Naive thymus-derived CD4-positive, alpha-beta T cell (primary cell): ENCODE measurements at regions of chr6 and their contacts with region 1.

Region 1: GRCh38 chr6:87154993-87155841 is at the start of gene ZNF292:
- DNase-seq: peak; percentile 82 to 97 (median 94)
- ATAC-seq: peak; percentile 85
- H3K4me3 ChIP-seq: peak within 1 kb of the TSS; percentile 93
- H3K4me3 Mint-ChIP-seq: peak within 1 kb of the TSS; percentile 81 to 99 (median 94)
- H3K27ac ChIP-seq: peak within 1 kb of the TSS; percentile 83
- H3K27ac Mint-ChIP-seq: peak within 1 kb of the TSS; percentile 88 to 99 (median 94)
- H3K4me1 ChIP-seq: peaks cover 40 to 45% of the 10 kb centered on the region in 2 donors
- H3K4me1 Mint-ChIP-seq: peaks cover 34 to 69% (median 55%) of the 10 kb centered on the region in 7 donors
- H3K27me3 ChIP-seq: no peaks in the 10 kb centered on the region
- H3K27me3 Mint-ChIP-seq: peaks cover 0 to 2% (median 0%) of the 10 kb centered on the region in 5 donors
- total RNA-seq, gene ZNF292: 62.4 to 87.5 (median 74.3) TPM

Region 2: DNA sequence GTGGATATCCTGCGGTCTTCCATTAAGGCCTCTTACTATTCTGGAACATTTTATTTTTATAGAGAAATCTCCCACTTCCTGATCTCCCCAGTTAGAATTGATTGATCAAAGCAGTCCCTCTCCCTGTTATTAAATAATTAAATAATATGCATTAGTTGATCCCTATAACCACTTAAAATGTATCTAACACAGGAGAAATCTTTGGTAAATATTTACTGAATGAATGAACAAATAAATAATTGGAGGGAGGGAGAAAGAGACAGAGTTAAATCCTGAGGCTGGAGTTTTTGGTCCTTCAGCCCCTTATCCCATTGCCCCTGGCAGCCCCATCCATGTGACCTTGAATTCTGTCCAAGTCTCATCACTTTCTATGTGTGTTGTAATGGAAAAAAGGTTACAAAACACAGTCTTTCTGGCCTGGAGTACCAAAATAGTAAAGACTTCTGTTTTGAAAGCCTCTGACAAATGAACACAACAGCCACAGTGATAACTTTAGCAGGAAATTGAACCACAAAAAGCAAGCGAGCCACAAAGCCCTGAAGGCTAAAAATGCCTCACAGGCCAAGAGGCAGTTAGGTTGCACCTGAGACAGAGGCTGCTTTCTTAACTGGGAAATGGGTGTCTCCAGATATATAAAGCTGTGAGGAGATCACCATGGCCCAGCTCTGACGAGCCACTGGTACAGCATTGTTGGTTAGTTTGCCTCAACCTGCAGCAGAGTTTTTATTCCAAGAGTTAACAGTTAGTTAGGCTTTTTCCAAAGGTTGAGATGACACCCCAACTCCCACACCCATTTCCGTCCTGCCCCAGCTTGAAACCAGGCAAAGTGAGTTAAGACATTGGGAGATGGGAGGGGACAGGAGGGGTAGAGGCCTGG is 1694.1 kb before region 1 on chr6:
- CTCF ChIA-PET with region 1: no interaction called
- POLR2A ChIA-PET with region 1: no interaction called
- intact Hi-C with region 1: loop called in 1 of 2 experiments (anchors 10 kb)
- DNase-seq: peak in 6 of 9 donors; percentile 17 to 53 (median 46)
- ATAC-seq: peak; percentile 54
- H3K4me3 ChIP-seq: no peak overlapping the region
- H3K4me3 Mint-ChIP-seq: peak overlapping the region in 7 of 10 donors; percentile 32 to 72 (median 68)
- H3K27ac ChIP-seq: no peak overlapping the region
- H3K27ac Mint-ChIP-seq: peak overlapping the region in 8 of 9 donors; percentile 38 to 92 (median 71)
- H3K4me1 ChIP-seq: peaks cover 9 to 25% of the 10 kb centered on the region in 2 donors
- H3K4me1 Mint-ChIP-seq: peaks cover 23 to 95% (median 63%) of the 10 kb centered on the region in 7 donors
- H3K27me3 ChIP-seq: no peaks in the 10 kb centered on the region
- H3K27me3 Mint-ChIP-seq: peaks cover 0 to 30% (median 28%) of the 10 kb centered on the region in 5 donors

Region 3: GRCh38 chr6:85678602-85679444 is 1476.4 kb before region 1 on chr6:
- CTCF ChIA-PET with region 1: no interaction called
- POLR2A ChIA-PET with region 1: no interaction called
- intact Hi-C with region 1: loop called (anchors 1 to 2 kb)
- DNase-seq: peak; percentile 97 to 99 (median 98)
- ATAC-seq: peak; percentile 96
- H3K4me3 ChIP-seq: peak overlapping the region; percentile 98
- H3K4me3 Mint-ChIP-seq: peak overlapping the region; percentile 93 to 100 (median 98)
- H3K27ac ChIP-seq: peak overlapping the region; percentile 93
- H3K27ac Mint-ChIP-seq: peak overlapping the region; percentile 96 to 100 (median 99)
- H3K4me1 ChIP-seq: peaks cover 23 to 26% of the 10 kb centered on the region in 2 donors
- H3K4me1 Mint-ChIP-seq: peaks cover 26 to 51% (median 40%) of the 10 kb centered on the region in 7 donors
- H3K27me3 ChIP-seq: no peaks in the 10 kb centered on the region
- H3K27me3 Mint-ChIP-seq: peaks cover 0 to 4% (median 0%) of the 10 kb centered on the region in 5 donors

Region 4: DNA sequence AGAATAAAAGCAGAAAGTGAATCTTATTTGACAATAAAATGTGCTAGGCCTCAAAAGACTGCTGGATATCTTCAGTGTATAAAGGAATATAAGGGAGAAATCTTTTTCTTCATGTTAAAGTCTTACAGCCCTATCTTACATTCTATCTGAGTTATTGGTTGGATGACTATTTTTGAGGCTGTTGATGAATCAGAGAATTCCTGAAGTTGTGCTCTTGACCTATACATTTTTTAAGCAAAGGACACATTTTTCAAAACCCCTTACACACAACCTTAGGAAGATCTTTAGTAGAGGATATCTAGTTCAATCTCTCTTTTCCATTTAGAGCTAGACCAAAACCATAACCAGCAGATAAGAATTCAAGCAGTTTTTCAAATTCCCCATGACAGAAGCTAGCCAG is 49.4 kb before region 1 on chr6:
- CTCF ChIA-PET with region 1: no interaction called
- POLR2A ChIA-PET with region 1: no interaction called
- intact Hi-C with region 1: no loop called
- DNase-seq: no peak
- ATAC-seq: no peak
- H3K4me3 ChIP-seq: no peak overlapping the region
- H3K4me3 Mint-ChIP-seq: no peak overlapping the region
- H3K27ac ChIP-seq: no peak overlapping the region
- H3K27ac Mint-ChIP-seq: no peak overlapping the region
- H3K4me1 ChIP-seq: no peaks in the 10 kb centered on the region
- H3K4me1 Mint-ChIP-seq: no peaks in the 10 kb centered on the region
- H3K27me3 ChIP-seq: no peaks in the 10 kb centered on the region
- H3K27me3 Mint-ChIP-seq: peaks cover 5 to 17% (median 12%) of the 10 kb centered on the region in 5 donors

Region 5: DNA sequence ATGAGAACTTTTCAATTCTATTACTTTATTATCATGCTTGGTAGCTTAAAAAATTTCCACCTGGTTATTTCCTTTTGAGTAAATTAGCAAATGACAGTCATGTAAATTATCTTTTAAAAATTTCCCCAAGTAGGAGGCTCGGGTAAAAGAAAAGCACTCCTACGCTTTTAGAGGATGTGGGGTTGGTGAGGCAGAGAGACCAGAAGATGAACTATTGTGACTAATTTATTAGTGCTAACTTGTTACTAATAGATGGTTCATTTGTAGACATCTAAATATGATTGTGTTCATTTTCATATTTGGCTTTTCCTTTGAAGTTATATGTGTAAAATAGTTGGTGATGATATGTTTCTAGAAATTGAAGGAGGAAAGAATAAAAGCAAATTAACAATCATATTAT is 27.1 kb after region 1 on chr6:
- CTCF ChIA-PET with region 1: no interaction called
- POLR2A ChIA-PET with region 1: no interaction called
- intact Hi-C with region 1: no loop called
- DNase-seq: no peak
- ATAC-seq: no peak
- H3K4me3 ChIP-seq: no peak overlapping the region
- H3K4me3 Mint-ChIP-seq: peak overlapping the region in 1 of 10 donors; percentile 16
- H3K27ac ChIP-seq: no peak overlapping the region
- H3K27ac Mint-ChIP-seq: peak overlapping the region in 4 of 9 donors; percentile 17 to 64 (median 42)
- H3K4me1 ChIP-seq: peaks cover 4 to 9% of the 10 kb centered on the region in 2 donors
- H3K4me1 Mint-ChIP-seq: peaks cover 29 to 86% (median 74%) of the 10 kb centered on the region in 7 donors
- H3K27me3 ChIP-seq: no peaks in the 10 kb centered on the region
- H3K27me3 Mint-ChIP-seq: no peaks in the 10 kb centered on the region

Region 6: GRCh38 chr6:87197547-87197946 is 42.3 kb after region 1 on chr6:
- CTCF ChIA-PET with region 1: no interaction called
- POLR2A ChIA-PET with region 1: no interaction called
- intact Hi-C with region 1: loop called (anchors 5 kb)
- DNase-seq: no peak
- ATAC-seq: no peak
- H3K4me3 ChIP-seq: no peak overlapping the region
- H3K4me3 Mint-ChIP-seq: no peak overlapping the region
- H3K27ac ChIP-seq: no peak overlapping the region
- H3K27ac Mint-ChIP-seq: no peak overlapping the region
- H3K4me1 ChIP-seq: peaks cover 4 to 11% of the 10 kb centered on the region in 2 donors
- H3K4me1 Mint-ChIP-seq: peaks cover 37 to 90% (median 76%) of the 10 kb centered on the region in 7 donors
- H3K27me3 ChIP-seq: no peaks in the 10 kb centered on the region
- H3K27me3 Mint-ChIP-seq: no peaks in the 10 kb centered on the region

Region 7: DNA sequence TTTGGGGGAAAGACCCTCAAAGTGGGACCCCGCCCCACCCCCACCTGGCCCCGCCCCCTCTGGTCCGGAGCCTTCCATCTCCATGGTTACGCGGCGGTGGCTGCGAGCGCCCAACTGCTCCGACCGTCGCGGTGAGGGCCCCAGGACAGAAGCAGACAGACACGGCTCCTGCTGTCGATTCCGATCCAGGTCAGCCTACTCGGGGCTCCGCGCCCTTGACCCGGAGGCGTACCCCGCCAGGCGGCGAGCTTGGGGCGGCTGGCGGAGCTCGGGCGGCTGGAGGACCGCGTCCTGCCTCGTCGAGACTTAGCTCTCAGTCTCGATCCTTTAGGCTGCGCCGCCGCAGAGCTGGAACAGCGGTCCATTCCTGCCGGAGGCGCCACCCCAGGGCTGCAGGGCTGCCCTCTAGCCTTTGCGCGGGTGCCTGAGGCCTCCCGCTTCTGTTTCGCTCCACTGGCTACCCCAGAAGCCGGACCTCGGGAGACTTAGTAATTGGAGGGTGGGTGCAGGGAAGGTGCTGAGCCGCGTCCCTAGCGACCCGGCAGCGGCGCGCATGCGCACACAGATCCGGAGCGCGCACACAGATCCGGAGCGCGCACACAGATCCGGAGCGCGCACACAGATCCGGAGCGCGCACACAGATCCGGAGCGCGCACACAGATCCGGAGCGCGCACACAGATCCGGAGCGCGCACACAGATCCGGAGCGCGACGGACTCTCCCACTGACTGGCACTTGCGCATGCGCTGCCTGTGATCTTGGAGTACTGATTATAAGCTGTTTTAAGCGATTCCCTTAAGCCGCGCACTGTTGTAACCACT is 252.9 kb after region 1 on chr6 and contains the start of gene CFAP206:
- CTCF ChIA-PET with region 1: no interaction called
- POLR2A ChIA-PET with region 1: interaction called, 4 read pairs
- intact Hi-C with region 1: loop called (anchors 1 kb)
- DNase-seq: peak; percentile 75 to 87 (median 81)
- ATAC-seq: peak; percentile 91
- H3K4me3 ChIP-seq: peak within 1 kb of the TSS; percentile 98
- H3K4me3 Mint-ChIP-seq: peak within 1 kb of the TSS; percentile 76 to 94 (median 88)
- H3K27ac ChIP-seq: peak within 1 kb of the TSS; percentile 75
- H3K27ac Mint-ChIP-seq: peak within 1 kb of the TSS in 8 of 9 donors; percentile 21 to 91 (median 70)
- H3K4me1 ChIP-seq: peaks cover 0 to 5% of the 10 kb centered on the region in 2 donors
- H3K4me1 Mint-ChIP-seq: peaks cover 0 to 7% (median 5%) of the 10 kb centered on the region in 7 donors
- H3K27me3 ChIP-seq: no peaks in the 10 kb centered on the region
- H3K27me3 Mint-ChIP-seq: peaks cover 18 to 47% (median 23%) of the 10 kb centered on the region in 5 donors
- total RNA-seq, gene CFAP206: not detected

Region 8: GRCh38 chr6:87772597-87773530 is 617.6 kb after region 1 on chr6:
- CTCF ChIA-PET with region 1: no interaction called
- POLR2A ChIA-PET with region 1: no interaction called
- intact Hi-C with region 1: no loop called
- DNase-seq: no peak
- ATAC-seq: no peak
- H3K4me3 ChIP-seq: no peak overlapping the region
- H3K4me3 Mint-ChIP-seq: no peak overlapping the region
- H3K27ac ChIP-seq: no peak overlapping the region
- H3K27ac Mint-ChIP-seq: no peak overlapping the region
- H3K4me1 ChIP-seq: no peaks in the 10 kb centered on the region
- H3K4me1 Mint-ChIP-seq: peaks cover 0 to 3% (median 0%) of the 10 kb centered on the region in 7 donors
- H3K27me3 ChIP-seq: no peaks in the 10 kb centered on the region
- H3K27me3 Mint-ChIP-seq: peaks cover 0 to 9% (median 0%) of the 10 kb centered on the region in 5 donors

Region 9: DNA sequence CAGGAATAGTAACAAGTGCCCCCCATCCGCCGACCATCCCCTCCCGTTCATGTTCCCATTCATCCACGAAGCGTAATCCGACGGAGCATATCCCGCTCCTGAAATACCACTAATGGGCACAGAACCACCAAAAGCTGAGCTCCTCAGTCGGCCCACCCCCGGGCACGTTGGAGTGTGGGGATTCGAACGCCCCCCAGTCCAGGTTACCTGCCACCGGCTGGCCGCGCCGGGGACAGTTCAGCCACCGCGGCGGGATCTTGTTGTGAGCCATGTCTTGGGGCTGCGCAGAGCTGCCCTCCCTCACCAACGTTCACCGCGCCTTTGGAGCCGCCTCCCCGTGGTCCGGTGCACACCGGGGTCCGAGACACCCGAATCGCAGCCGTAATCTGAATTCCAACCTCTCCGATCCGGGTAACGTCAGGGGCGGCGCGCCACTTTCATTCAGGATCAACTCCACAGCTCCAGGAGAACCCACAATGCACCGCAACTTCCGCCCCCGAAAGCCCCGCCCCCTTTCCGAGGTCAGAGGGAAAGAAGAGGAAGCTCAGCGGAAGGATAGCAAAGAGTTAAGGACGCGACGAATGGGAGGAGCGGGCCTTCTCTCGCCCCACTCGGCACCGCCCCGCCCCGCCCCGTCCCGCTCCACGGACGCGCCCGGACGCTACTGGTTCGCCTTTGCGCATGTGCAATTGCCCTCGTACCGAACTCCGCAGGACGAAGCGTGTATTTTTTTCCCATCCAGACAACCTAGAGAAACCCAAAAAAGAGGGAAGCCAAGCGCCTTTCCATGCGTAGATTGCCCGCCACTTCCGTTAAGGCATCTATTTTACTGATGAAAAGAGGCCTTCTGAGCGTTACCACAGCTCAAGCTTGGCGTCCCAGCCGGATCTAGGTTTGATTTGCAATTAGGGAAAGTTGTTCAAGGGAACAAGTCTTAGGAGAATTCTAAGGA is 1808.2 kb after region 1 on chr6 and contains the start of gene RNGTT:
- CTCF ChIA-PET with region 1: no interaction called
- POLR2A ChIA-PET with region 1: no interaction called
- intact Hi-C with region 1: loop called (anchors 1 to 5 kb)
- DNase-seq: peak; percentile 89 to 98 (median 95)
- ATAC-seq: peak; percentile 100
- H3K4me3 ChIP-seq: peak within 1 kb of the TSS; percentile 82
- H3K4me3 Mint-ChIP-seq: peak within 1 kb of the TSS; percentile 91 to 99 (median 98)
- H3K27ac ChIP-seq: peak within 1 kb of the TSS; percentile 82
- H3K27ac Mint-ChIP-seq: peak within 1 kb of the TSS; percentile 85 to 97 (median 94)
- H3K4me1 ChIP-seq: peaks cover 9 to 18% of the 10 kb centered on the region in 2 donors
- H3K4me1 Mint-ChIP-seq: peaks cover 25 to 57% (median 52%) of the 10 kb centered on the region in 7 donors
- H3K27me3 ChIP-seq: no peaks in the 10 kb centered on the region
- H3K27me3 Mint-ChIP-seq: peaks cover 0 to 2% (median 0%) of the 10 kb centered on the region in 5 donors
- total RNA-seq, gene RNGTT: 15.4 to 26.5 (median 20.8) TPM